Ascending aorta (tissue), 2 donors: ENCODE measurements at regions of chr9 and their contacts with region 1.

Region 1: GRCh38 chr9:134641173-134641985 is at the start of gene COL5A1:
- DNase-seq: peak; percentile 65 to 95
- H3K4me3 ChIP-seq: peak within 1 kb of the TSS; percentile 74 to 75
- H3K27ac ChIP-seq: peak within 1 kb of the TSS; percentile 92 to 93
- H3K4me1 ChIP-seq: peaks cover 11 to 18% of the 10 kb centered on the region in 2 donors
- H3K27me3 ChIP-seq: no peaks in the 10 kb centered on the region
- CTCF ChIP-seq: peak in 2 of 3 experiments; percentile 32 to 62
- total RNA-seq, gene COL5A1: 99.6 TPM

Region 2: GRCh38 chr9:134135343-134136118 is 505.8 kb before region 1 on chr9 and contains the start of gene WDR5:
- intact Hi-C with region 1: loop called (anchors 10 kb)
- DNase-seq: peak; percentile 57 to 93
- H3K4me3 ChIP-seq: peak within 1 kb of the TSS; percentile 90 to 96
- H3K27ac ChIP-seq: peak within 1 kb of the TSS; percentile 76 to 82
- H3K4me1 ChIP-seq: peaks cover 11 to 39% of the 10 kb centered on the region in 2 donors
- H3K27me3 ChIP-seq: no peaks in the 10 kb centered on the region
- CTCF ChIP-seq: peak in 1 of 3 experiments; percentile 12
- total RNA-seq, gene WDR5: 13.9 TPM

Region 3: GRCh38 chr9:134449221-134449894 is 192.0 kb before region 1 on chr9:
- intact Hi-C with region 1: loop called (anchors 1 kb)
- DNase-seq: peak; percentile 67 to 95
- H3K4me3 ChIP-seq: no peak overlapping the region
- H3K27ac ChIP-seq: no peak overlapping the region
- H3K4me1 ChIP-seq: no peaks in the 10 kb centered on the region
- H3K27me3 ChIP-seq: no peaks in the 10 kb centered on the region
- CTCF ChIP-seq: peak; percentile 86 to 94 (median 86)

Region 4: DNA sequence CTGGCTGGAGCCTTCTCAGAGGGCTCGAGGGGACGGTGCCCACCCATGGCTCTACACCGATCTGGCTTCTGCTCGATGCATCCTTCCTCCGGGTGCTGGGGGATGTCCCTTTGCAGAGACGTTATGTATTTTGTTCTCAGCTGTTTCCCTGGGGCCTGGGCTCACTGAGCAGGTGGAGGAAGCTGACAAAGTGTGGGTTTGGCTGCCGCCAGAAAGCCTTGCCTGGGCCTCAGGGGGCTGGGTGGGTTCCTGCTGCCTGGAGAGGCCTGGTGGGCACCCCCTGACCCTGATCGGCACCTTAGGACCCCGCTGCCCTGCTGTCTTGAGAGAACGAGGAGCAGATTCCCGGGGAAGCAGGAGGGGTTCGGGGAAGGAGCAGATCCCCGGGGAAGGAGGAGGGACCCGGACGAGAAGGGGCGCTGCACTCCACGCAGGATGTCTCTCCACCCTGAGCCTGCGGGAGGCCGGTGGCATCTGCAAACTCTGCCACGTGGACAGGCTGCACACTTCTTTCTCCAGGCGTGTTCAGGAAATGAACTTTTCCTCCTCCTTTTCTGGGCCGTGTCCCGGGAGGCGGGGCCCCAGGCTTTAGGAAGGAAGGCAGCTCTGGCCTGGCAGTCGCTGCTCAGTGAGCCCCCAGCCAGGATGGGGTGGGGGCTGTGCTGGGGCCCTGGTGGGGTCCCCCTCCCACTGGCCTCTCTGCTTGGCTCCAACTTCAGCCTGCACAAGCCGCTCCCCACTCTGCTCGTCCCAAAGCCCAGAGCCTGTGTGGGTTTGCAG is 166.2 kb before region 1 on chr9:
- intact Hi-C with region 1: loop called (anchors 5 kb)
- DNase-seq: peak in 1 of 2 donors; percentile 88
- H3K4me3 ChIP-seq: peak overlapping the region in 1 of 2 donors; percentile 2
- H3K27ac ChIP-seq: peak overlapping the region; percentile 78 to 90
- H3K4me1 ChIP-seq: peaks cover 43 to 45% of the 10 kb centered on the region in 2 donors
- H3K27me3 ChIP-seq: no peaks in the 10 kb centered on the region
- CTCF ChIP-seq: no peak

Region 5: DNA sequence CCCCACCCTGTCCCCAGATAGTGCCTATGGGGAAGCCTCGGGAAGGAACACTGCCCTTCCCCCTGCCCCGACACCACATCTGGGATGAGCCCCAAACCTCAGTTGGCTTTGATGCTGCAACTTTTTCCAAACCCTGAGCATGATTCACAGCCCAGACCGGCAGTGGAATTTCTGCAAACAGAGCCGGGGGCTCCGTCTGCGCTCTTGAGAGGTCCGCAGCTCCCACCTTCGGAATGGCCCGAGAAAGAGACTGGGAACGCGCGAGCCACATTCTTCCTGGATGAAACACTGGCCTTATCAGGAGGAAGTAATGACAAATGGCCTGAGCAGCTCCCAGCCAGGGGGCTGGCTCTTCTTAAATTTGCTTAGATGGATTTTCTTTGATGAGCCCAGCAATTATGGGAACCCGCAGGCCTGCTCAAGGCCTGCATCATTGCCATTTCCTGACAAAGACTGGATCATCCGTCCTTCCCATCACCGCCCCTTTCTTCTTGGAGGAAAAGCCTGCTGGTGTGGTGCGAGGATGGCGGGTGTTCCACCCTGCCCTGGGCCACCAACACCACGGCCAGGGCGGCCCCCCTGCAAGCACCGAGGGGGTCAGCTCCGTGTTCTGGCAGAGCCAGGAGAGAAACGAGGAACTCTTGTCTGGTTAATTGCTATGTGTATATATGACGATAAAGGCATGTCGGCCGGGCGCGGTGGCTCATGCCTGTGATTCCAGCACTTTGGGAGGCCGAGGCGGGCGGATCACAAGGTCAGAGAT is 38.7 kb before region 1 on chr9:
- intact Hi-C with region 1: loop called (anchors 2 kb)
- DNase-seq: peak in 1 of 2 donors; percentile 91
- H3K4me3 ChIP-seq: no peak overlapping the region
- H3K27ac ChIP-seq: peak overlapping the region; percentile 37 to 54
- H3K4me1 ChIP-seq: peaks cover 2 to 4% of the 10 kb centered on the region in 2 donors
- H3K27me3 ChIP-seq: no peaks in the 10 kb centered on the region
- CTCF ChIP-seq: no peak

Region 6: DNA sequence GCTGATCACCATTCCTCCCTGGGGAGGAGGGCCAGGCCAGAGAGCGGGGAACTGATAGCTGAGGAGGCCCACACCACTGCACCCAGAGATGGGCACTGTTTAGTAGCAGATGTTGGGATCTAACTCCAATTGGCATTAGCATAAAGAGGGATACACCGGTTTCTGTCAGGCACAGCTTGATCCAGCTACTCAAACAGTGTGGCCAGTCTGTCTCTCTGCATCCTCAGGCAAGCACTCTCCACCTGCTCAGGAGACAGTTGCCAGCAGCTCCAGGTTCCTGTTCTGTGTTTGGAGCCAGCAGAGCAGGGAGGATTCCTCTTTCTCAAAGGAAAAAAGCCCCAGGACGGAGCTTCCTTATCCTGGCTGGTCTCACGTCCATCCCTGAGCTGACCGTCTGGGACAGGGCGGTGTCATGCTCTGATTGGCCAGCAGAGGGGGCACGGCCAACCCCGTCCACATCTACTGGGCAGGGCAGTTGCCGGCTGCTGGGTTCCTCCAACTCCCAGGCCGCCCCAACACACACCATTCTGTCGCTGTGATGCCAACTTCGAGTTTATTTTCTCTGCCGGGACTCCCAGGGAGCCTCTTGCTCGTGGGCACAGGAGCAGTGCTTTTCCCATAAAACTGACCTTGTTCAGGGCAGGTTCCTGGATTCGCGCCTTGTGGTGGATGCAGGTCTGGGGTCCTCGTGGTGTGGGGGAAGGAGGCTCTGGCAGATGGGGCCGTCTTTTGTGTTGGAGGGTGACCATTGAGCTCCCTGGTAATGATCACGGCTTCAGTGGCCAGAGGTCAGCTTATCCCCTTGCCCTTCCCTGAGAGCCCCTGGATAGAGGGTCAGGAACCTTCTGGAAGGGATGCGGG is 48.2 kb after region 1 on chr9:
- intact Hi-C with region 1: loop called (anchors 2 kb)
- DNase-seq: peak in 1 of 2 donors; percentile 83
- H3K4me3 ChIP-seq: no peak overlapping the region
- H3K27ac ChIP-seq: no peak overlapping the region
- H3K4me1 ChIP-seq: peaks cover 3 to 11% of the 10 kb centered on the region in 2 donors
- H3K27me3 ChIP-seq: no peaks in the 10 kb centered on the region
- CTCF ChIP-seq: peak; percentile 76 to 92 (median 91)